ENCODE measurements at regions of chr16 and their contacts with region 1.

Region 1: GRCh38 chr16:27237219-27238015 is 31.2 kb downstream of the NSMCE1 start:
- DNase-seq: peak in 1 of 5 donors; percentile 34
- H3K4me3 ChIP-seq: no peak overlapping the region
- H3K27ac ChIP-seq: no peak overlapping the region
- H3K4me1 ChIP-seq: peaks cover 12% of the 10 kb centered on the region
- H3K27me3 ChIP-seq: no peaks in the 10 kb centered on the region
- CTCF ChIP-seq: no peak
- EP300 ChIP-seq: no peak
- POLR2A ChIP-seq: no peak

Region 2: DNA sequence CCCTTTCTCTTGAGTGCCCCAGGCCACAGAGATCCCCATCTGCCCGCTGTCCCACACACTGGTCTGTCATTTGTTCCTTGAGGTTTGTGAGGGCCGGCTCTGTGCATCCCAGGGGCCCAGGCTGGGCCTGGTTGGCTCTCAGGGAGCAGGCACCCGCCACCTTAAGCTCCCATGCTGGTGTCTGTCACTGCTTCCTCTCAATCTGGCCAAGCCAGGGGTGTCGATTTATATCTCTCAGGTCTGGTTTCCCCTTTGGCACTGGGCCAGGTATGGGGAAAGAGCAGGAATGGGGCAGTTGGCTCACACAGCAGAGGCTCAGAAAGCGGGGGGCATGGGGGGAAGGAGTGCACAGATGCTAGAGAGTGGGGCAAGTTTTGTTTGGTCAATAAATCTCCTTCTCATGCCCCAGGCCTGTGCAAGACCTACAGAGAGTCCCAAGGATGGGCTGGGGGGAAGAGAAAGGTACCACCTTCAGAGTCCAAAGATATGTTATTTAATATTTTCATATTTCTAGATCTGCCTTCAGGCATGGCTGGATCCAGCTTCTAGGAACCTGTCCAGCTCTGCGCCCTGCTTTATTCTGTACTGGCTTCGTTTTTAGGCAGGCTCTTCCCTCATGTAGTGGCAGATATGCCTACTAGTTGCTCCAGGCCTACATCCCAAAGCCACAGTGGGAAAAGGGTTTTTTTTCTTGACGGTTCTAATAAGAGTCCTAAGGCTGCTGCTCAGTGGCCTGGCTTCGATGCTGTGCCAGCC is 110.7 kb after region 1 on chr16:
- intact Hi-C with region 1: no loop called
- DNase-seq: no peak
- H3K4me3 ChIP-seq: no peak overlapping the region
- H3K27ac ChIP-seq: no peak overlapping the region
- H3K4me1 ChIP-seq: no peaks in the 10 kb centered on the region
- H3K27me3 ChIP-seq: no peaks in the 10 kb centered on the region
- CTCF ChIP-seq: no peak
- EP300 ChIP-seq: no peak
- POLR2A ChIP-seq: no peak

Region 3: DNA sequence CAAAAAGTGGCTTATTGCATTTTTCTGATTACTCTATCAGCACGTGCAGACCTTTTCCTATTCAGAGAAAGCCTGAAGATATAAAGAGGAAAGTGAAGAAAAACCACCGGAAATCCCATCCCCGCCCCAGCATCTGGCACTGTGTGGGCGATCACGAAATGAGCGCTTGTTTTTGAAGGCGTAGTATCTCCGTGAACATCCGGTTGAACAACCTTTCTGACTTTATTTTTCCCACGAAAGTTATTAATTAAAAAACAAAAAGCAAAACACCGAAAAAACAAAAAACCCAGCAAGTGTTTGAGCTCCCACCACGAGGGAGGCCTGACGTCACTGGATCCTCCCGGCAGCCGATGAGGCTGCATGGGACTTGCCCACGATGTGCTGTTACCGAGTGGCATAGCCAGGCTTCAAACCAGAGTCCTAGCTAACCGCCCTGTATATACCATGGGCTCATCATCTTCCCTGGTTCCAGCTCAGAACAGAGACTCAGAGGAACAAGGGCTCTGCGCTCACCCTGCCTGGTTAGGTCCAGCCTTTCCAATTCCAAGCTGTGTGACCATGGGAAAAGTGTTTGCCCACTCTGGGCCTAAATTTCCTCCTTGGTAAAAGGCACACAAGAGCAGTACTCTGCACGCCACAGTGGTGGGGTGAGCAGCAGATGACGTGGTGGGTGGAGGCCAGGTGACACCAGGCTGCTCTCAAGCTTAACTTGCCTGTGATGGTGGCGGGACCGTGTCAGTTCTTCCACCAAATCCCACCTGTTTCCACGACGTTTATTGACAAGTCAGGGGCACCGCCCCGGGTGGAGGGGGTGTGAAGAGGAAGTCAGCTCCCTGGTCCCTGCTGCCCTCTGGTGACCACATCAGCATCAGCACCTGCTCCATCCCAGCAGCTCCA is 130.3 kb after region 1 on chr16:
- intact Hi-C with region 1: loop called in 1 of 4 experiments (anchors 2 kb)
- DNase-seq: peak; percentile 19 to 75 (median 68)
- H3K4me3 ChIP-seq: no peak overlapping the region
- H3K27ac ChIP-seq: peak overlapping the region in 1 of 2 donors; percentile 13
- H3K4me1 ChIP-seq: peaks cover 4% of the 10 kb centered on the region
- H3K27me3 ChIP-seq: no peaks in the 10 kb centered on the region
- CTCF ChIP-seq: peak in 2 of 3 donors; percentile 51
- EP300 ChIP-seq: no peak
- POLR2A ChIP-seq: no peak

Measured in ovary (tissue), 10 donors.